GM12878 (cell line): ENCODE measurements at regions of chr20 and their contacts with region 1.

Region 1: DNA sequence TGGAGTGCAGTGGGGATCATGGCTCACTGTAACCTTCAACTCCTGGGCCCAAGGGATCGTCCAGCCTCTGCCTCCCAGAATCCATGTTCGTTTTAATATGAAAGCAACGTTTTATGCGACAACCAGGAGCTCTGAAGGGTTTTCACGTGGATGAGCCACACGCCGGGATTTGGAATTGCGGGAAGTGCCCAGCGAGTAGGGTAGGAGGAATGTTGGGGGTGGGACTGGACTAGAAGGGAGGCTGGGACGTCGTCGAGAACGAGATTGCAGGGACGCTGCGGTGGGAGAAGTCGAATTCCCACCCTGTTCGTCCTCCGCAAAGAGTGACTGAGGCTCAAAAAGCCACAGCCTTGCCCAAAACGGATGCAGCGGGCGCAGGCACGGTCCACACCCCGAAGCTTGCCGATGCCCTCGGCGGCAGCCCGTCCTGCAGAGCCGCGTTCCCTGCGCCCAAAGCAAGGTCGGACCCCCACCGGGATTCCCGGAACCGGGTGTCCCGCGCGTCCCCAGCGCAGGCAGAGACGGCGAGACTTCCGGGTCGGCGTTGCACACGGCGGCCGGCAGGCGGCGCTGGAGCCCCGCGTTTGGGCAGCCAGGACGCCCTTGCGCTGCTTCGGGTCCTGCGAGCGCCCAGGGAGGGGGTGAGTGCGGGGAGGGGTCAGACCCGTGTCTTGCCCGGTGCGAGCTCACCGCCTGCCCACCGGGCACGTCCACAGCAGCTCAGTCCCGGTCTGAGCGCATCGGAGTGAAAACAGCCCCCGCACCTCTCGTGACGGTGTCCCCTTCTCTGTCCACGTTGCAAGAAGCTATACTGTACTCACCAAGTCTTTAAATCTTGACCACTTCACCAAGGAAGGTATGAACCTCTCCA is 87.8 kb downstream of the DHX35 start:
- DNase-seq: peak; percentile 21
- ATAC-seq: peak; percentile 93
- H3K4me3 ChIP-seq: peak overlapping the region; percentile 75
- H3K27ac ChIP-seq: 0 out of 2 replicates have a peak overlapping the region, but pooled peaks have one; percentile 33
- H3K4me1 ChIP-seq: peaks cover 4% of the 10 kb centered on the region; the same call in 1 of the 2 replicates
- H3K27me3 ChIP-seq: no peaks in the 10 kb centered on the region
- CTCF ChIP-seq: peak; percentile 99; a peak in 5 of 6 replicates
- EP300 ChIP-seq: no peak
- POLR2A ChIP-seq: peak; percentile 77
- RAD21 ChIP-seq: peak; percentile 86

Region 2: DNA sequence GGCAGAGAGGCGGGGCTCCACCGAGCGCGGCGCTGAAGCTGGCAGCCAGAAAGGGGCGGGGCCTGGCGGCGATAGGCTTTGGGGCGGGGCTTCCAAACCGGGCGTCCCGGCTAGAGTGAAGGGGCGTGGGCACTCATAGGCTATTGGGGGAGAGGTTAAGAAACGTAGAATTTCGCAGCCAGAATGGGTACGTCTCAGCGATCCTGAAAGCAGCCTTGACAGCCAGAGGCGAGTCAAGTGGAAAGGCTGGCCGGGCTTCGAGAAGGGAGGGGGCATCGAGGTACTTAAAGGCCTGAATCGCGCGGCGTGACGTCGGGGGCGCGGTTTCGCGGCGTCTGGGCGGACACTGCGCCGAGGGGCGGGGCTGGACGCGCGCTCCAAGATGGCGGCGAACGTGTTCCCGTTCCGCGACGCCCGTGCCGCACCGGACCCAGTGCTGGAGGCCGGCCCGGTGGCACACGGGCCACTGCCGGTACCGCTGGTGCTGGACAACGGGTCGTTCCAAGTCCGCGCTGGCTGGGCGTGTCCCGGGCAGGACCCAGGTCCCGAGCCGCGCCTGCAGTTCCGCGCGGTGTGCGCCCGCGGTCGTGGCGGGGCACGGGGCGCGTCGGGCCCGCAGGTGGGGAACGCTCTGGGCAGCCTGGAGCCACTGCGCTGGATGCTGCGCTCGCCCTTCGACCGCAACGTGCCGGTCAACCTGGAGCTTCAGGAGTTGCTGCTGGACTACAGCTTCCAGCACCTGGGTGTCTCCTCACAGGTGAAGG is 301.6 kb before region 1 on chr20 and contains the start of gene ACTR5:
- CTCF ChIA-PET with region 1: interaction called, 27 read pairs
- POLR2A ChIA-PET with region 1: no interaction called
- RAD21 ChIA-PET with region 1: interaction called, 4 read pairs
- SMC1A ChIA-PET with region 1: interaction called, 5 read pairs
- in situ Hi-C with region 1: no loop called
- intact Hi-C with region 1: loop called (anchors 10 kb)
- DNase-seq: peak; percentile 76
- ATAC-seq: peak; percentile 94
- H3K4me3 ChIP-seq: peak within 1 kb of the TSS; percentile 75
- H3K27ac ChIP-seq: peak within 1 kb of the TSS; percentile 71
- H3K4me1 ChIP-seq: peaks cover 8% of the 10 kb centered on the region; the same call in 1 of the 2 replicates
- H3K27me3 ChIP-seq: no peaks in the 10 kb centered on the region
- CTCF ChIP-seq: no peak
- EP300 ChIP-seq: no peak
- POLR2A ChIP-seq: peak; percentile 94
- RAD21 ChIP-seq: no peak
- polyA plus RNA-seq, gene ACTR5: 0.52 to 1.7 TPM

Region 3: DNA sequence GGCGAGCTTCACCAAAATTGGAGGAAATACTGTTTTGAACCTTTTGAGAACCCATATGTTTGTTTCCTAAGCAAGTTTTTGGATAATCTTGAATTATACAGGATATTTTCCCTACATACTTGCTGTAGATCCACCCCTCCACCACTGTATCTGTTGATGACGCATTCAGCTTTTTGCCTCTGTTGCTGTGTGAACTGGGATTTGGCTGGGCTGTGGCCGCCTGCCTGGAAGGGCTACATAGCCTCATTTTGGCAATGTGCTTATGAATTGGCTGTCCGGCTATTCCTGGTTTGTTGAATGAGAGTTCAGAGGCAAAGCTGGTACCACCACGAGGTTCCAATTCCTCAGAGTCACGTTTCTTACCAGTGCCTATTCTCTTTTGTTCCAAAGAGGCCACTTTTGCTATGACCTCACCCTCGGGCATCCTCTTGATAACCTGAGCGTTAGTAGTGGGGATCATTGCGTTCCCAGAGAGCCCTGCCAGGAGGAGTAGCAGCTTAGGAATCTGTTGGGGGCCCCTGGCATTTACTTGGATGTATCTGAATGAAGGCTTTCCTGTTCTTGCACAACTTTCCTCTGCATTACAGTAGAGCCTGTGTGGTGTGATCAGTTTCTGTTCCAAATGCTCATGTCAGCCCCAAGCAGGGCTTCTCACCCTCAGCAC is 117.3 kb before region 1 on chr20:
- CTCF ChIA-PET with region 1: interaction called, 182 read pairs
- POLR2A ChIA-PET with region 1: interaction called, 7 read pairs
- RAD21 ChIA-PET with region 1: interaction called, 91 read pairs
- SMC1A ChIA-PET with region 1: interaction called, 54 read pairs
- in situ Hi-C with region 1: no loop called
- intact Hi-C with region 1: no loop called
- DNase-seq: no peak
- ATAC-seq: peak; percentile 38
- H3K4me3 ChIP-seq: peak overlapping the region; percentile 55; the same call in 1 of the 2 replicates
- H3K27ac ChIP-seq: peak overlapping the region; percentile 26; the same call in 1 of the 2 replicates
- H3K4me1 ChIP-seq: peaks cover 12% of the 10 kb centered on the region
- H3K27me3 ChIP-seq: no peaks in the 10 kb centered on the region
- CTCF ChIP-seq: no peak
- EP300 ChIP-seq: no peak
- POLR2A ChIP-seq: no peak
- RAD21 ChIP-seq: no peak

Region 4: GRCh38 chr20:38997622-38998021 is 52.3 kb before region 1 on chr20:
- CTCF ChIA-PET with region 1: interaction called, 70 read pairs
- POLR2A ChIA-PET with region 1: no interaction called
- RAD21 ChIA-PET with region 1: interaction called, 33 read pairs
- SMC1A ChIA-PET with region 1: interaction called, 16 read pairs
- in situ Hi-C with region 1: no loop called
- intact Hi-C with region 1: no loop called
- DNase-seq: peak; percentile 87
- ATAC-seq: peak; percentile 99
- H3K4me3 ChIP-seq: no peak overlapping the region
- H3K27ac ChIP-seq: peak overlapping the region; percentile 49
- H3K4me1 ChIP-seq: peaks cover 14% of the 10 kb centered on the region
- H3K27me3 ChIP-seq: no peaks in the 10 kb centered on the region
- CTCF ChIP-seq: peak; percentile 49 to 63 (median 52)
- EP300 ChIP-seq: peak; percentile 45 to 59; a peak in 3 of 4 replicates
- POLR2A ChIP-seq: peak; percentile 26; the same call in 1 of the 2 replicates
- RAD21 ChIP-seq: peak; percentile 64

Region 5: GRCh38 chr20:39039261-39039660 is 10.7 kb before region 1 on chr20:
- CTCF ChIA-PET with region 1: interaction called, 13 read pairs
- POLR2A ChIA-PET with region 1: no interaction called
- RAD21 ChIA-PET with region 1: interaction called, 3 read pairs
- SMC1A ChIA-PET with region 1: interaction called, 6 read pairs
- in situ Hi-C with region 1: no loop called
- intact Hi-C with region 1: no loop called
- DNase-seq: no peak
- ATAC-seq: no peak
- H3K4me3 ChIP-seq: no peak overlapping the region
- H3K27ac ChIP-seq: no peak overlapping the region
- H3K4me1 ChIP-seq: no peaks in the 10 kb centered on the region
- H3K27me3 ChIP-seq: no peaks in the 10 kb centered on the region
- CTCF ChIP-seq: no peak
- EP300 ChIP-seq: no peak
- POLR2A ChIP-seq: no peak
- RAD21 ChIP-seq: no peak

Region 6: DNA sequence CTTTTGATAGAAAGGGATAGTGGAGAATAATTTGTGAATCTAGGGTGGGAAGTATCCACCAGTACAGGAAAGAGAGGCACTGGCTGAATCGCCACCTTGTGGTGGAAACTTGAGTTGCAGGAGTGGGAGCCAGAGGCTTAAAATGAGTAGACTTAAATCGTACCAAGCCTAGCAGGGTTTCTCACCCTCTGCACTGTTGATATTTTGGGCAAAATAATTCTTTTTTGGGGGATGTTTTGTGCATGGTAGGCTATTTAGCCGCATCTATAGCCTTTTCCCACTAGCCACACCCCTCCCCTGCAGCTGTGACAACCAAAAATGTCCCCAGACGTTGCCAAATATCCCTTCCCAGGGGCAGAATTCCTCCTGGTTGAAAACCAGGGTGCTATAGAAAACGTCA is 31.3 kb after region 1 on chr20:
- CTCF ChIA-PET with region 1: interaction called, 152 read pairs
- POLR2A ChIA-PET with region 1: interaction called, 3 read pairs
- RAD21 ChIA-PET with region 1: interaction called, 28 read pairs
- SMC1A ChIA-PET with region 1: interaction called, 61 read pairs
- in situ Hi-C with region 1: no loop called
- intact Hi-C with region 1: loop called (anchors 1 kb)
- DNase-seq: peak; percentile 33
- ATAC-seq: peak; percentile 97
- H3K4me3 ChIP-seq: no peak overlapping the region
- H3K27ac ChIP-seq: no peak overlapping the region
- H3K4me1 ChIP-seq: no peaks in the 10 kb centered on the region
- H3K27me3 ChIP-seq: peaks cover 0 to 5% of the 10 kb centered on the region in 2 experiments; a peak in 2 of 4 replicates
- CTCF ChIP-seq: peak; percentile 87 to 92 (median 89)
- EP300 ChIP-seq: no peak
- POLR2A ChIP-seq: no peak
- RAD21 ChIP-seq: peak; percentile 64